ENCODE measurements at regions of chr17 and their contacts with region 1.

Region 1: DNA sequence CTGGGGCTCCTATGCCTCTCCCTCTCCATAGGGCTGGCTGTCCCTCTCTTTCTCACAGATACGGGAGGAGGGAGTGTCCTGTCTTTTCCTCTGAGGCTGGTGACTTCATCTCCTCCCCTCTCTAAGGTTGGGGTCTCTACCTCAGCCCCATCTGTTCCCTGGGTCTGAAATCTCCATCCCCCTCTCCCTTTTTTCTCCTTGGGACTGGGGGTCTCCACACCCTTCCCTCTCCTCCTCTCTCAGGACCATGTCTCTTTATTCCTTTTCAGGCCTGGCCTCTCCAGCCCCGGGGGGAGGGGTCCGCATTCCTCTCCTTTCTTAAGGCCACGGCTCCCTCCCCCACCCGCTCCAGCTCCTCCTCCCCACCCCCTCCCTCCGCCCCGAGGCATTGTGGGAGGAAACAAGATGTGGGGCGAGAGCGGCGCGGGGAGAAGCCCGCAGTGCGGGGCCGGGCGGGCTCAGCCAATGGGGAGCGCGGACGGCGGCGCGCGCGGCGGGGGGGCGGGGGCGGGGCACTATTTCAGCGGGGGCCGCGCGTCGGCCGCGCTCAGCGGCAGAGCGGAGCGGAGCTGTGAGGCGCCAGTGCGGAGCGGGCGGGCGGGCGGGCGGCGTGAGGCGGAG is at the start of gene DYNLL2:
- DNase-seq: peak; percentile 79
- H3K4me3 ChIP-seq: peak within 1 kb of the TSS; percentile 79
- H3K27ac ChIP-seq: peak within 1 kb of the TSS; percentile 39
- H3K27me3 ChIP-seq: peaks cover 10% of the 10 kb centered on the region
- CTCF ChIP-seq: no peak
- polyA plus RNA-seq, gene DYNLL2: 16.7 and 18.2 TPM in 2 replicates

Region 2: DNA sequence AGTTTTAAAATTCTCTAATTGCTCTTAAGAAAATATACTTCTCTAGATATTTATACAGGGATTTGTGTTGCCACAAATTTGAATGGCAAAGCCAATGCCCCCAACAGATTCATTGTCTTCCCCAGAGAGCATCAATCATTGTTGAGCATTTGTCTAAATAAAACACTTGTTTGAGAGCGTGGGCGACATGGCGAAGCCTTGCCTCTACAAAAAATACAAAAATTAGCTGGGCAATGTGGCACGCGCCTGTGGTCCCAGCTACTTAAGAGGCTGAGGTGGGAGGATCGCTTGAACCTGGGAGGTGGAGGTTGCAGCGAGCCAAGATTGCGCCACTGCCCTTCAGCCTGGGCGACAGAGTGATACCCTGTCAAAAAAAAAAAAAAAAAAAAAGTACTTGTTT is 62.6 kb before region 1 on chr17:
- CTCF ChIA-PET with region 1: no interaction called
- POLR2A ChIA-PET with region 1: interaction called, 11 read pairs
- DNase-seq: no peak
- H3K4me3 ChIP-seq: no peak overlapping the region
- H3K27ac ChIP-seq: no peak overlapping the region
- H3K27me3 ChIP-seq: peaks cover 4% of the 10 kb centered on the region
- CTCF ChIP-seq: no peak

Measured in AG04450 (cell line).